Activated naive CD8-positive, alpha-beta T cell treated with anti-CD3 and anti-CD28 coated beads, Interleukin-2, amount 10 ng/mL, durations not matched to agents 7 days and 5 days (primary cell): ENCODE measurements at regions of chr17 and their contacts with region 1.

Region 1: DNA sequence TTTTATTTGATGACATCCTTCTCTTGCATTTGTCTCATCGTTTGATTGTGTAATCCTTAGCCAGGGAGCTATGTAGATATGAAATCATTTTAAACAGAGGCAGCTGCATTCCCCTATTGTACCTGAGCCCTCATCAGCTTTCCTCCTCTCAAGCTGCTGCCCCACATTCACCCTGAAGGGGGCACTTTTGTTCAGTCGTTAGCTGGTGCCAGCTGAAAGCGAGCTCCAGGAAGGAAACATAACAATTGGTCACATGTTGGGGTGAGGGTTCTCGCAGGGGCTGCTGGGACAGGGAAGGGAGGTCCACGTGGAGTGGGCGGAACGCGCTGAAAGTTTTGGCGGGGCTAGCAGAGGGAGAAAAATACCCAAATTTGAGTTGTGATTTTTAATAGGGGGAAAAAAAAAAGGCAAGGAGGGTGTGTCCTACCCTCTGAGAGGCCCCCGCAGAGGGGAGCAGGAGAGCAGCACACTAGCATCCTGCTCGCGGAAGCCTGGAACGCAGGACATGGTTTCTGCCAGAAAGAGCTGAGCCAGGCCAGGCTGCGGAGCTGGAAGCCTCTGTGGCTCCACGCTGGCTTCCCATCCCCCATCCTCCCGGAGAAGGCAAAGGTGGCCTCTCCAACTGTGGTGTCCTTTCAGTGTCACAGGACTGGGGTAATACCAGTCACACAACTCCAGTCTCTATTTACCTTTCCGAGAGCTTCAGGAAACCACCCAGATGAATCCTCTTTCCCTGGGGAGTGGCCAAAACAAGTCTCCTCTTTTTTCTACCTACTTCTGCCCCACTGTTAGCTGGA is 8.5 kb upstream of the MSL1 start:
- DNase-seq: peak; percentile 86
- ATAC-seq: peak; percentile 85
- H3K4me3 Mint-ChIP-seq: peak overlapping the region; percentile 94
- H3K27ac Mint-ChIP-seq: peak overlapping the region; percentile 80
- H3K4me1 Mint-ChIP-seq: peaks cover 45% of the 10 kb centered on the region
- H3K27me3 Mint-ChIP-seq: no peaks in the 10 kb centered on the region

Region 2: DNA sequence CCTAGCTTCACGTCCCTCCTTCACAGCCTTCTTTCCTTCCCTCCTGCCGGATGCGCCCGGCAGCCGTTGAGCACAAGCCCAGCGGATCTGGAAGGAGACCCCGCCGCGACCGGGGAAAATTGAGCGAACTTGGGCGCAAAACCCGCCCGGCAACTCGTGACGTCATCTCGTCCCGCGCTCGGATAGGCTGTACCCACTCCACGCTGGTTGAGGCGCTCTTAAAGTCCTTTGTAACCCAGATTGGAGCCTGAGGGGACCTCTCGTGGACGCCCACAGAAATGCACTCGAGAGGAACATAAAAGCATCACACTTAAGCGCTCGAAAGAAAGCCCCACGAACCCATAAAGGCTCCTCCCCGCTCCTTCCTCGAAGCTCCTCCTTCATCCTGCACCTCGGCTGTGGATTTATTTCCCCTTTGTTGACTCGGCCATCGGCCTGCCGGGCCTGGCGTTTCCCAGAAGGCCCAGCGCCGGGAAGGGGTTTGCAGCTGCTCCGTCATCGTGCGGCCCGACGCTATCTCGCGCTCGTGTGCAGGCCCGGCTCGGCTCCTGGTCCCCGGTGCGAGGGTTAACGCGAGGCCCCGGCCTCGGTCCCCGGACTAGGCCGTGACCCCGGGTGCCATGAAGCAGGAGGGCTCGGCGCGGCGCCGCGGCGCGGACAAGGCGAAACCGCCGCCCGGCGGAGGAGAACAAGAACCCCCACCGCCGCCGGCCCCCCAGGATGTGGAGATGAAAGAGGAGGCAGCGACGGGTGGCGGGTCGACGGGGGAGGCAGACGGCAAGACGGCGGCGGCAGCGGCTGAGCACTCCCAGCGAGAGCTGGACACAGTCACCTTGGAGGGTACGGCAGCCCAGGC is 132.7 kb before region 1 on chr17 and contains the start of gene PSMD3:
- POLR2A ChIA-PET with region 1: no interaction called
- DNase-seq: peak; percentile 94
- ATAC-seq: peak; percentile 94
- H3K4me3 Mint-ChIP-seq: peak within 1 kb of the TSS; percentile 97
- H3K27ac Mint-ChIP-seq: peak within 1 kb of the TSS; percentile 94
- H3K4me1 Mint-ChIP-seq: peaks cover 27% of the 10 kb centered on the region
- H3K27me3 Mint-ChIP-seq: peaks cover 22% of the 10 kb centered on the region
- total RNA-seq, gene PSMD3: 82.5 to 87.9 TPM

Region 3: GRCh38 chr17:40038882-40039513 is 74.3 kb before region 1 on chr17:
- POLR2A ChIA-PET with region 1: no interaction called
- DNase-seq: no peak
- ATAC-seq: no peak
- H3K4me3 Mint-ChIP-seq: no peak overlapping the region
- H3K27ac Mint-ChIP-seq: no peak overlapping the region
- H3K4me1 Mint-ChIP-seq: no peaks in the 10 kb centered on the region
- H3K27me3 Mint-ChIP-seq: no peaks in the 10 kb centered on the region

Region 4: GRCh38 chr17:40086150-40087044 is 26.9 kb before region 1 on chr17:
- POLR2A ChIA-PET with region 1: interaction called, 16 read pairs
- DNase-seq: peak; percentile 65
- ATAC-seq: no peak
- H3K4me3 Mint-ChIP-seq: no peak overlapping the region
- H3K27ac Mint-ChIP-seq: no peak overlapping the region
- H3K4me1 Mint-ChIP-seq: peaks cover 5% of the 10 kb centered on the region
- H3K27me3 Mint-ChIP-seq: no peaks in the 10 kb centered on the region

Region 5: DNA sequence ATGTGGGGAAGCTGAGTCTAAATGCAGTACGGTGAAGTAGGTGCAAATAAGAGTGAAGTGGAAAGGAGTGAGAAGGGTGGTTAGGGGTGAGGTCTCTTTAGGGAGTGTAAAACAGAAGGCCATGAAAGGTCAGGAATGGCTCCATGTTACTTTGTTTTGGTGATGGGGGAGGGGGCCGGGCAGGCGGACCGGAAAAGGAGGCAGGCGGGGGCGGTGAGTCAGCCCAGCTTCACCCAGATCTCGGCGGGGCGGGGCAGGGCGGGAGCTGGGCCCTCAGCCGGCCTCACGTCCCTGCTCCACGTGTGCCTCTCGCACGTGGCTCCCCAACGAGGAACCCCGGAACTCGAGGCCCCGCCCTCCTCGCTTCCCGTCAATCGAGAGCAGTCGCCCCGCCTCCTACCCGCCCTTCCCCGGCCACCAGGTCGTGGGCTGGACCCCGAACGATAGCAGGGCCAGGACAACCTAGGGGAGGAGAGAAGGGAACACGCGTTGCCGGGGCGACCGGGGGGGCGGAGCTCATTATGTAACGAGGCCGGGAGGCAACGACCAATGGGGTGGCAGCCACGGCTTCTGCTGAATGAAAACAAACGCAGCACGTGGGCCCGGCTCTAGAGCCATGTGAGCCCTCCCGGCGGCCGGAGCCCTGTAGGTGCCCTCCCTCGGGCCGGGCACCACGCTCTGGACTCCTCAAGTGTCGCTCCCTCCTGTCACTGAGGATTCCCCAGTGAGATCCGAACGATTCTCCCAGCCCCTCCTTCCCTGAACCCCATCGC is 14.3 kb before region 1 on chr17:
- POLR2A ChIA-PET with region 1: interaction called, 46 read pairs
- DNase-seq: peak; percentile 95
- ATAC-seq: peak; percentile 55
- H3K4me3 Mint-ChIP-seq: peak overlapping the region; percentile 94
- H3K27ac Mint-ChIP-seq: peak overlapping the region; percentile 78
- H3K4me1 Mint-ChIP-seq: peaks cover 71% of the 10 kb centered on the region
- H3K27me3 Mint-ChIP-seq: no peaks in the 10 kb centered on the region

Region 6: DNA sequence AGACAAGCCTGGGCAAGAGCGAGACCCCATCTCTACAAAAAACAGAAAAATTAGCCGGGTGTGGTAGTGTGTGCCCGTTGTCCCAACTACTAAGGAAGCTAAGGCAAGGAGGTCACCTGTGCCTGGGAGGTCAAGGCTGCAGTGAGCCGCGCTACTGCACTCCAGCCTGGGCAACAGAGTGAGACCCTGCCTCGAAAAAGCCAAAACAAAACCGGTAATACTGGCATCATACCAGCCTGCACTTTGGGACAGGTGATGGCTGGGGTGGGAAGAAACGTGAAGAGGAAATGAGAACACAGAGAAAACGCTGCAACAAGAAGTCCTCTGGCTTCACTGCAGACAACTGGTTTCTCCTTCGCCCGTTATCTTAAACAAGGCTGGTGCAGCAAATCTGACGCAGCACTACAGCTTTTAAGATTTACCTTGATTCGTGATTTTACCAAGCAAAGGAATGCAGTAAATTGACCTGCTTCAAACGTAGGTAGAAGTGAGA is 26.3 kb after region 1 on chr17:
- POLR2A ChIA-PET with region 1: interaction called, 18 read pairs
- DNase-seq: peak; percentile 38
- ATAC-seq: peak; percentile 1
- H3K4me3 Mint-ChIP-seq: peak overlapping the region; percentile 99
- H3K27ac Mint-ChIP-seq: peak overlapping the region; percentile 97
- H3K4me1 Mint-ChIP-seq: peaks cover 28% of the 10 kb centered on the region
- H3K27me3 Mint-ChIP-seq: no peaks in the 10 kb centered on the region

Region 7: GRCh38 chr17:40168262-40168832 is 55.0 kb after region 1 on chr17:
- POLR2A ChIA-PET with region 1: interaction called, 18 read pairs
- DNase-seq: no peak
- ATAC-seq: peak; percentile 33
- H3K4me3 Mint-ChIP-seq: no peak overlapping the region
- H3K27ac Mint-ChIP-seq: peak overlapping the region; percentile 68
- H3K4me1 Mint-ChIP-seq: peaks cover 10% of the 10 kb centered on the region
- H3K27me3 Mint-ChIP-seq: no peaks in the 10 kb centered on the region

Region 8: DNA sequence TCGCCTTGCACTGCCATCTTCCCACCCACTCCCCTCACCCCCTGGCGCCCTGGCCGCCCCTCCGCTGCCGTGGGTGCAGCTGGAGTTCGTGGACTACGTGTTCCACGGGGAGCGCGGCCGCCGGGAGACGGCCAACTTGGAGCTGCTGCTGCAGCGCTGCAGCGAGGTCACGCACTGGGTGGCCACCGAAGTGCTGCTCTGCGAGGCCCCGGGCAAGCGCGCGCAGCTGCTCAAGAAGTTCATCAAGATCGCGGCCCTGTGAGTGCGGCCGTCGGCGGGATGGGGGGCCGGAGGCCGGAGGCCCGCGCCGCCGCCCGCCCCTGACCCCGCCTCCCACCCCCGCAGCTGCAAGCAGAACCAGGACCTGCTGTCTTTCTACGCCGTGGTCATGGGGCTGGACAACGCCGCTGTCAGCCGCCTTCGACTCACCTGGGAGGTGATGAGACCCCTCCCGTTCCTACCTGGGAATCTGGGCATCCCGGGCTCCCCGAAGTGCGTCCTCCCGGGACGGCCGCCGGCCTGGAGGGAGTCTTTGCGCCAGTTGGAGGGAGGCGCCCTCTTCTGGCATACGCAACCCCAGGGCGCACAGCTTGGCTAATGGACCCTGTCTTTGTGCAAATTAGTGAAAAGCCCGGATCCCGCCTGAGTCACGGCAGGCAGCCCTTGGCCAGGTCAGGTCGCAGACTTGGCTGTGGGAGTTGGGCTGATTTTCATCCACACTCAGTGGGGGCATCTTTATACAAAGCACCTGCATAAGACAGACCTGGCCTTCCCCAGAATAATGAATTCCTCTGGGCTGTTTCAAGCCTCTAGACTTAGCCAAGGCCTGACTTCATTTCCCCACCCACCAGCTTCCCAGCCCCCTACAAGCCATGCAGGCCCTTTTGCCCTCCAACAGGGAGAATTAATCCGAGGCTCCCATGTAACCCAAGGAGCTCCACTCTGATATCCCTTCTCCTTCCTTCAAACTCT is 78.2 kb after region 1 on chr17:
- POLR2A ChIA-PET with region 1: interaction called, 23 read pairs
- DNase-seq: peak; percentile 79
- ATAC-seq: peak; percentile 89
- H3K4me3 Mint-ChIP-seq: peak overlapping the region; percentile 94
- H3K27ac Mint-ChIP-seq: peak overlapping the region; percentile 68
- H3K4me1 Mint-ChIP-seq: peaks cover 14% of the 10 kb centered on the region
- H3K27me3 Mint-ChIP-seq: peaks cover 5% of the 10 kb centered on the region